ENCODE measurements at regions of chr9 and their contacts with region 1.

Region 1: GRCh38 chr9:112097712-112098688 is 77.1 kb downstream of the SUSD1 start:
- DNase-seq: peak; percentile 79
- H3K4me3 Mint-ChIP-seq: no peak overlapping the region
- H3K27ac Mint-ChIP-seq: no peak overlapping the region
- H3K4me1 Mint-ChIP-seq: no peaks in the 10 kb centered on the region
- H3K27me3 Mint-ChIP-seq: no peaks in the 10 kb centered on the region
- CTCF ChIP-seq: peak; percentile 75

Region 2: GRCh38 chr9:112086627-112087026 is 11.4 kb before region 1 on chr9:
- CTCF ChIA-PET with region 1: interaction called, 30 read pairs
- POLR2A ChIA-PET with region 1: interaction called, 3 read pairs
- intact Hi-C with region 1: no loop called
- DNase-seq: peak; percentile 39
- H3K4me3 Mint-ChIP-seq: no peak overlapping the region
- H3K27ac Mint-ChIP-seq: peak overlapping the region; percentile 65
- H3K4me1 Mint-ChIP-seq: peaks cover 6% of the 10 kb centered on the region
- H3K27me3 Mint-ChIP-seq: no peaks in the 10 kb centered on the region
- CTCF ChIP-seq: peak; percentile 62

Region 3: DNA sequence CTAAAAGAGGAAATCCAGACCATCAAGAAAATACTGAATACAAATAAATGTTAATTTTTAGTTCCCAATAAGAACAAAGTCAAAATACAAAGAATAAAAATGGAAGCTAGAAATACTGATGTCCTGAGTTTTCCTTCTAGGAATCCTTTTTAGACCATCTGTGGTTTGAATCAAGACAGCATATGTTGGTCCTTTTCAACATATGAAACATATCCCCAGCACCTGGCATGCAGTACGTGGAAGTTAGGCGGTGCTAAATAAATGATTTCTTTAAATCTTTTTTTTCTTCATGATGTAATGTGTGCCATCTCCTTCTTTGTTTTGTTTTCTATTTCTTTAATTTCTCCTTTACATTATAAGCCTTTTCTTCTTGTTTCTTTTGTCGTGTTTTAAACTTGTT is 422.7 kb after region 1 on chr9:
- CTCF ChIA-PET with region 1: no interaction called
- POLR2A ChIA-PET with region 1: no interaction called
- intact Hi-C with region 1: no loop called
- DNase-seq: no peak
- H3K4me3 Mint-ChIP-seq: no peak overlapping the region
- H3K27ac Mint-ChIP-seq: no peak overlapping the region
- H3K4me1 Mint-ChIP-seq: no peaks in the 10 kb centered on the region
- H3K27me3 Mint-ChIP-seq: no peaks in the 10 kb centered on the region
- CTCF ChIP-seq: no peak

Measured in MCF 10A (cell line).